Right ventricle myocardium inferior (tissue), 1 donor: ENCODE measurements at regions of chr10 and their contacts with region 1.

Region 1: GRCh38 chr10:133329491-133330202 is 7.0 kb downstream of the CALY start:
- DNase-seq: peak; percentile 91
- ATAC-seq: peak; percentile 80

Region 2: GRCh38 chr10:132836832-132837540 is 492.7 kb before region 1 on chr10:
- intact Hi-C with region 1: loop called (anchors 10 kb)
- DNase-seq: peak; percentile 68
- ATAC-seq: no peak

Region 3: GRCh38 chr10:133475821-133476640 is 146.4 kb after region 1 on chr10:
- intact Hi-C with region 1: no loop called
- DNase-seq: no peak
- ATAC-seq: no peak

Region 4: GRCh38 chr10:133520155-133520738 is 190.6 kb after region 1 on chr10:
- intact Hi-C with region 1: loop called (anchors 1 kb)
- DNase-seq: peak; percentile 90
- ATAC-seq: peak; percentile 97

Region 5: GRCh38 chr10:133608855-133609254 is 279.2 kb after region 1 on chr10:
- intact Hi-C with region 1: loop called (anchors 5 kb)
- DNase-seq: no peak
- ATAC-seq: no peak